HepG2 (cell line): ENCODE measurements at regions of chr21 and their contacts with region 1.

Region 1: DNA sequence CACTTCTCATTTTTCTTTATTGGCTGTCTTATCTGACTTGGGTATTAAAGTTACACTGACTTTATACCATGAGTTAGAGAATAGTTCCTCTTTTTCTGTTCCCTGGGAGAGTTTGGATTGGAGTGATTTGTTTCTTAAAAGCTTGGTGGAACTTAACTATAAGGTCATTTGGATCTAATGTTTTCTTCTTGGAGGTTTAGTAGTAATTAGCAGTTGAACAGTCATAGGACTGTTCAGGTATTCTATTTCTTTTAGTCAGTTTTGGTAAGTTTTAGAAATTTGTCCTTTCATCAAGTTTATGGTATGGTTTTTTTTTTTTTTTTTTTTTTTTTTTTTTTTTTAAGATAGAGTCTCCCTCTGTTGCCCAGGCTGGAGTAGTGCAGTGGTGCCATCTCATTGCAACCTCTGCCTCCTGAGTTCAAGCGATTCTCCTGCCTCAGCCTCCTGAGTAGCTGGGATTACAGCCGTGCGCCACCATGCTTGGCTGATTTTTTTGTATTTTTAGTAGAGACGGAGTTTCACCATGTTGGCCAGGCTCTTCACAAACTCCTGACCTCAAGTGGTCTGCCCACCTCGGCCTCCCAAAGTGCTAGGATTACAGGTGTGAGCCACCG is 6.3 kb downstream of the TTC3 start:
- DNase-seq: peak; percentile 25
- ATAC-seq: peak; percentile 56; the same call in 2 of the 3 replicates
- H3K4me3 ChIP-seq: no peak overlapping the region
- H3K27ac ChIP-seq: no peak overlapping the region
- H3K4me1 ChIP-seq: peaks cover 75% of the 10 kb centered on the region
- H3K27me3 ChIP-seq: no peaks in the 10 kb centered on the region
- CTCF ChIP-seq: peak; percentile 41
- EP300 ChIP-seq: no peak
- POLR2A ChIP-seq: no peak
- RAD21 ChIP-seq: no peak

Region 2: GRCh38 chr21:36976882-36977651 is 102.3 kb before region 1 on chr21:
- CTCF ChIA-PET with region 1: interaction called, 6 read pairs
- POLR2A ChIA-PET with region 1: no interaction called
- in situ Hi-C with region 1: no loop called
- intact Hi-C with region 1: loop called (anchors 2 kb)
- DNase-seq: peak; percentile 87
- ATAC-seq: peak; percentile 89
- H3K4me3 ChIP-seq: peak overlapping the region in 1 of 3 experiments; percentile 7; a peak in 1 of 6 replicates
- H3K27ac ChIP-seq: peak overlapping the region; percentile 18
- H3K4me1 ChIP-seq: peaks cover 22% of the 10 kb centered on the region
- H3K27me3 ChIP-seq: no peaks in the 10 kb centered on the region
- CTCF ChIP-seq: peak; percentile 87
- EP300 ChIP-seq: no peak; a peak in 1 of 4 replicates
- POLR2A ChIP-seq: no peak
- RAD21 ChIP-seq: peak; percentile 77

Region 3: GRCh38 chr21:37009740-37010341 is 69.5 kb before region 1 on chr21:
- CTCF ChIA-PET with region 1: no interaction called
- POLR2A ChIA-PET with region 1: no interaction called
- in situ Hi-C with region 1: no loop called
- intact Hi-C with region 1: loop called (anchors 2 kb)
- DNase-seq: peak; percentile 83
- ATAC-seq: peak; percentile 96
- H3K4me3 ChIP-seq: peak overlapping the region; percentile 56 to 74 (median 57)
- H3K27ac ChIP-seq: no peak overlapping the region
- H3K4me1 ChIP-seq: peaks cover 22% of the 10 kb centered on the region
- H3K27me3 ChIP-seq: peaks cover 0 to 4% of the 10 kb centered on the region in 2 experiments; a peak in 1 of 5 replicates
- CTCF ChIP-seq: peak; percentile 97
- EP300 ChIP-seq: no peak
- POLR2A ChIP-seq: 0 out of 4 replicates have a peak, but pooled peaks of 1 of the 2 experiments have one; percentile 23
- RAD21 ChIP-seq: peak; percentile 89

Region 4: DNA sequence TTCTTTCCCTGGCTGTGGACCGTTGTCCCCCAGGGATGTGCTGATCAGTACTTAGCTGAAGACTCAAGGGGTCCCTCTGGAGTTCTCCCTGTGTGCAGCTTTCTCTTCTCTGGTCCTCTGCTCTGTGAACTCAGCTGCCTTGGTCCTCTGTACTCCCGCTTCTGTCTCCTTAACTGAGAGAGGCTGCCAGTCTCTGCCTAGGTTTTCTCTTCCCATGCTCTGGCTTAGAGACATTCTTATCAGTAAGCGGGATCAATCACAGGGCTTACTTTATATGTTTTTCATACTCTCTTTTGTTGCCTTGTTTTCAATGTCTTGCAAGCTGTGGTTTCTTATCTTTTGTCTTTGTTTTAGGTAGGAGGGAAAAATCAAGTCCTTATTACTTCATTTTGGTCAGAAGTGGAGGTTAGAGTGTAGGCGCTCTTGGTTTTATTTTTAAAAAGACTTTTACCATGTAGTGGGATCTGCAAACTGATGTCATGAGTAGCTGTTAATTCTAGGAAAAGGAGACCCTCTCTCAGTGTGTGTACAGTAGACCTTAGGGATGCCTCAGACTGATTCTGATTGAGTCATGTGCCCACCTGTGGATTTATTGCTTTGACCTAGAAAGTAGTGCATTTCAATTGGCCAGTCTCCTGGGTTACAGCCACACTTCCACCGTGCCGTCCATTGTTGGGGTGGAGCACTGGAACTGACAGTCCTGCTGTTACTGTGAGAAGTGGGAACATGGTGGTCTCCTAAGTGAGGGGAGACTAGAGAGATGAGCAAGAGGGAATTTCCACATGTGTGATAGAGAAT is 40.3 kb after region 1 on chr21:
- CTCF ChIA-PET with region 1: no interaction called
- POLR2A ChIA-PET with region 1: no interaction called
- in situ Hi-C with region 1: no loop called
- intact Hi-C with region 1: loop called (anchors 5 kb)
- DNase-seq: peak; percentile 12
- ATAC-seq: peak; percentile 77
- H3K4me3 ChIP-seq: no peak overlapping the region
- H3K27ac ChIP-seq: peak overlapping the region; percentile 34
- H3K4me1 ChIP-seq: peaks cover 50% of the 10 kb centered on the region
- H3K27me3 ChIP-seq: no peaks in the 10 kb centered on the region
- CTCF ChIP-seq: peak; percentile 34
- EP300 ChIP-seq: no peak
- POLR2A ChIP-seq: no peak
- RAD21 ChIP-seq: no peak

Region 5: DNA sequence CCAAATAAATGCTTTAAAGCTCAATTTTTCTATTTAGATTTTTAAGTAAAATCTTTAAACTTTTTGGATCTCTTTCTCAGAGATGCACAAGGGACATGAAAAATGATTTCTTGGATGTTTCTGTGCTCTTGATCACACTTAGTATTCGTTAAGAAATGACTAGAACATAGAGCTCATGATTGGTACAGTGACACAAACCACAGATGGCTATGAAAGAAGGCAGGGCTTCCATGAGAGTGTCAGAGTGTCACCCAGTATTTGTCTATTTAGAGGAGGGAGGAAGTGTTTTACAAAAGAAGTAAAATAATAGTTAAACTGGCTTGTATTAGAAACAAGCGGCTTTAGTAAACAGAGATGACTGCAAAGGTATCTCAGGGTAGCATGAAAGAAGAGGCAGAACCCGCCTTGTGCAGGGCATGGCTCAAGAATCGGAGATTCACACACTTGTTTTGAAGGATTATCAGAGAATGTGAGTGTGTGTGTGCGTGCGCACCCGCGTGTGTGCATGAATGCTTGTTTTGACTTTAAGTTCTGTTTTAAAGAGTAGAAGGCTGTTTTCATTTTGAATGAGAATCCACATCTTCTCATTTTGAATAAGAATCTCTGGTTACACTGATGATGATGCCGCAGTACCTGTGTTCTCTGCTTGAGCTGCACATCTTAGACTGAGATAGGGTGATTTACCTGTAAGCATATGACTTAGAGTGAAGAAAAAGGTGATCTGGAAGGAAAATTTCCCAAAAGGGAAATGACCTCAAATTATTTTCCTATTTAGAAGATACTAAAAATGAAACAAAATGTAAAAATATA is 105.7 kb after region 1 on chr21:
- CTCF ChIA-PET with region 1: no interaction called
- POLR2A ChIA-PET with region 1: no interaction called
- in situ Hi-C with region 1: no loop called
- intact Hi-C with region 1: no loop called
- DNase-seq: no peak
- ATAC-seq: no peak
- H3K4me3 ChIP-seq: no peak overlapping the region
- H3K27ac ChIP-seq: no peak overlapping the region
- H3K4me1 ChIP-seq: no peaks in the 10 kb centered on the region
- H3K27me3 ChIP-seq: no peaks in the 10 kb centered on the region
- CTCF ChIP-seq: no peak
- EP300 ChIP-seq: no peak
- POLR2A ChIP-seq: no peak
- RAD21 ChIP-seq: no peak

Region 6: GRCh38 chr21:37232274-37233018 is 153.1 kb after region 1 on chr21:
- CTCF ChIA-PET with region 1: no interaction called
- POLR2A ChIA-PET with region 1: no interaction called
- in situ Hi-C with region 1: no loop called
- intact Hi-C with region 1: no loop called
- DNase-seq: no peak
- ATAC-seq: no peak
- H3K4me3 ChIP-seq: no peak overlapping the region
- H3K27ac ChIP-seq: no peak overlapping the region
- H3K4me1 ChIP-seq: no peaks in the 10 kb centered on the region
- H3K27me3 ChIP-seq: no peaks in the 10 kb centered on the region
- CTCF ChIP-seq: no peak
- EP300 ChIP-seq: no peak
- POLR2A ChIP-seq: no peak
- RAD21 ChIP-seq: no peak

Region 7: DNA sequence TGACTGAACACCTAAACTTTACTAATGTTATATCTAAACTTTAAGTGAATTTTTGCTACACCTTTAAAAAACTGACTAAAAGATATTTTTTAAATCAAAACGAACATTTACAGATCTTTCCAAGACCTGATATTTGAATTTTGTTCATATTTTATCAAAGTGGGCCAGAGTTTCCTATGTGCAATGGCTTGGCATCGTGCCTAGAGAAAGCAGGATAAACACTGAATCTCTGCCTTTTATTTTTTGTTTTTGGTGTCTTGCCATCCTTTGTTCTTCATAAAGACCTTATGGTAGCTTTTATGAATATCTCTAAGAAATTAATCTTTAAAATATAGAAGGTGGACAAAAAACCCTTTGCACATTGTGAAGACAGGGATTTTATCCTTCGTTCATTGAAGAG is 213.6 kb after region 1 on chr21:
- CTCF ChIA-PET with region 1: no interaction called
- POLR2A ChIA-PET with region 1: no interaction called
- in situ Hi-C with region 1: no loop called
- intact Hi-C with region 1: no loop called
- DNase-seq: no peak
- ATAC-seq: no peak
- H3K4me3 ChIP-seq: no peak overlapping the region
- H3K27ac ChIP-seq: no peak overlapping the region
- H3K4me1 ChIP-seq: peaks cover 8% of the 10 kb centered on the region; the same call in 1 of the 2 replicates
- H3K27me3 ChIP-seq: peaks cover 0 to 17% of the 10 kb centered on the region in 2 experiments; a peak in 3 of 5 replicates
- CTCF ChIP-seq: no peak
- EP300 ChIP-seq: no peak
- POLR2A ChIP-seq: no peak
- RAD21 ChIP-seq: no peak